T-cell (primary cell): ENCODE measurements at regions of chr4 and their contacts with region 1.

Region 1: GRCh38 chr4:184733654-184734524 is at the start of gene CENPU:
- DNase-seq: peak; percentile 85 to 96 (median 91)
- ATAC-seq: peak; percentile 94 to 97 (median 96)
- H3K4me3 ChIP-seq: peak within 1 kb of the TSS; percentile 66 to 79
- H3K4me3 Mint-ChIP-seq: peak within 1 kb of the TSS; percentile 83 to 89 (median 88)
- H3K27ac ChIP-seq: peak within 1 kb of the TSS; percentile 56
- H3K27ac Mint-ChIP-seq: peak within 1 kb of the TSS; percentile 88
- H3K4me1 ChIP-seq: peaks cover 0 to 10% of the 10 kb centered on the region in 2 experiments
- H3K4me1 Mint-ChIP-seq: peaks cover 11 to 18% (median 15%) of the 10 kb centered on the region in 3 donors
- H3K27me3 ChIP-seq: no peaks in the 10 kb centered on the region
- H3K27me3 Mint-ChIP-seq: no peaks in the 10 kb centered on the region
- total RNA-seq, gene CENPU: 1.5 to 7.8 (median 3.0) TPM

Region 2: GRCh38 chr4:184649026-184649970 is 84.6 kb before region 1 on chr4 and contains the starts of genes CASP3 and PRIMPOL:
- CTCF ChIA-PET with region 1: interaction called in 1 of 2 experiments, 11 read pairs
- POLR2A ChIA-PET with region 1: interaction called in 1 of 2 experiments, 8 read pairs
- DNase-seq: peak; percentile 88 to 98 (median 95)
- ATAC-seq: peak; percentile 87 to 94 (median 90)
- H3K4me3 ChIP-seq: peak within 1 kb of the TSS; percentile 85 to 97
- H3K4me3 Mint-ChIP-seq: peak within 1 kb of the TSS; percentile 98
- H3K27ac ChIP-seq: peak within 1 kb of the TSS; percentile 69
- H3K27ac Mint-ChIP-seq: peak within 1 kb of the TSS; percentile 96 to 97
- H3K4me1 ChIP-seq: peaks cover 31 to 37% of the 10 kb centered on the region in 2 experiments
- H3K4me1 Mint-ChIP-seq: peaks cover 50 to 58% (median 51%) of the 10 kb centered on the region in 3 donors
- H3K27me3 ChIP-seq: no peaks in the 10 kb centered on the region
- H3K27me3 Mint-ChIP-seq: no peaks in the 10 kb centered on the region
- total RNA-seq, gene CASP3: 10.7 to 23.5 (median 19.9) TPM
- total RNA-seq, gene PRIMPOL: 11.6 to 14.8 (median 12.4) TPM

Region 3: GRCh38 chr4:184688447-184688846 is 45.4 kb before region 1 on chr4:
- CTCF ChIA-PET with region 1: no interaction called
- POLR2A ChIA-PET with region 1: no interaction called
- DNase-seq: no peak
- ATAC-seq: no peak
- H3K4me3 ChIP-seq: no peak overlapping the region
- H3K4me3 Mint-ChIP-seq: no peak overlapping the region
- H3K27ac ChIP-seq: no peak overlapping the region
- H3K27ac Mint-ChIP-seq: no peak overlapping the region
- H3K4me1 ChIP-seq: no peaks in the 10 kb centered on the region
- H3K4me1 Mint-ChIP-seq: peaks cover 6 to 9% (median 7%) of the 10 kb centered on the region in 3 donors
- H3K27me3 ChIP-seq: no peaks in the 10 kb centered on the region
- H3K27me3 Mint-ChIP-seq: no peaks in the 10 kb centered on the region

Region 4: GRCh38 chr4:184745831-184746795 is 12.2 kb after region 1 on chr4:
- CTCF ChIA-PET with region 1: interaction called, 5 to 12 read pairs
- POLR2A ChIA-PET with region 1: interaction called, 3 to 4 read pairs
- DNase-seq: peak; percentile 42 to 82 (median 65)
- ATAC-seq: peak; percentile 81 to 94 (median 88)
- H3K4me3 ChIP-seq: no peak overlapping the region
- H3K4me3 Mint-ChIP-seq: peak overlapping the region in 2 of 3 donors; percentile 36 to 72
- H3K27ac ChIP-seq: peak overlapping the region; percentile 11
- H3K27ac Mint-ChIP-seq: peak overlapping the region; percentile 50 to 80
- H3K4me1 ChIP-seq: peaks cover 14 to 15% of the 10 kb centered on the region in 2 experiments
- H3K4me1 Mint-ChIP-seq: peaks cover 11 to 17% (median 15%) of the 10 kb centered on the region in 3 donors
- H3K27me3 ChIP-seq: no peaks in the 10 kb centered on the region
- H3K27me3 Mint-ChIP-seq: peaks cover 0 to 3% of the 10 kb centered on the region in 2 donors

Region 5: GRCh38 chr4:185395956-185396723 is 662.3 kb after region 1 on chr4:
- CTCF ChIA-PET with region 1: no interaction called
- POLR2A ChIA-PET with region 1: no interaction called
- DNase-seq: peak; percentile 88 to 98 (median 94)
- ATAC-seq: peak; percentile 91 to 96 (median 92)
- H3K4me3 ChIP-seq: peak overlapping the region; percentile 87 to 98
- H3K4me3 Mint-ChIP-seq: peak overlapping the region; percentile 90 to 95 (median 94)
- H3K27ac ChIP-seq: peak overlapping the region; percentile 96
- H3K27ac Mint-ChIP-seq: peak overlapping the region; percentile 94 to 96
- H3K4me1 ChIP-seq: peaks cover 4 to 7% of the 10 kb centered on the region in 2 experiments
- H3K4me1 Mint-ChIP-seq: peaks cover 21 to 31% (median 26%) of the 10 kb centered on the region in 3 donors
- H3K27me3 ChIP-seq: no peaks in the 10 kb centered on the region
- H3K27me3 Mint-ChIP-seq: no peaks in the 10 kb centered on the region